MCF 10A (cell line): ENCODE measurements at regions of chr7 and their contacts with region 1.

Region 1: DNA sequence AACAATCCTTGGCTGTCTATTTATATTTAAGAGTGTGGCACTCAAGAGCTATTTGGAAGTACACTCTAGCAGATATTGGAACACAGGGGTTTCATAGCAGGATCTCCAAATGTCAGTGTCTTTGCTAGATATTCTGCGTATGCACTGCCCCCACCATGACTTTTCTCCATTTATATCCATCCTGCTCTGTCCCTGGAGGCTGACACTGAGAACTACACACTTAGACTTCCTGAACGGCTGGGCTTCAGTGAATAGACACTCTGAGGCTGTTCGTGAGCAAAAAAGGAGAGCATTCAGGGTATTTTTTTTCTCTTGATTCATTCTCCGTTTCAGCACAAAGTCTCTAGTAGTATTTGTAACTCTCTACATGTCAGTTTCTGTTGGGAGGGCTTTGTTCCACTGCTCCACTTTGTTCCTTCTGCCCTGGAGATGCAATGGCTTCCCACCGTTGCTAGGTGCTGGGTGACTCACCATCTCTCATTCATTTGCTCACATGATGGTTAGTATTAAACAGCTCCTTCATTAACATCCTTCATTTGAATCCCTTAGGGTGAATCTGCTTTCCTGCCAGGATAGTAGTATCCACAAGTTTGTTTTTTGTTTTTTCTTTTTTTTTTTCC is 155.9 kb upstream of the SLC13A1 start:
- DNase-seq: peak; percentile 27
- H3K4me3 Mint-ChIP-seq: no peak overlapping the region
- H3K27ac Mint-ChIP-seq: no peak overlapping the region
- H3K4me1 Mint-ChIP-seq: no peaks in the 10 kb centered on the region
- H3K27me3 Mint-ChIP-seq: no peaks in the 10 kb centered on the region
- CTCF ChIP-seq: no peak

Region 2: GRCh38 chr7:123208793-123209192 is 146.9 kb before region 1 on chr7:
- CTCF ChIA-PET with region 1: interaction called, 18 read pairs
- POLR2A ChIA-PET with region 1: no interaction called
- intact Hi-C with region 1: no loop called
- DNase-seq: peak; percentile 39
- H3K4me3 Mint-ChIP-seq: no peak overlapping the region
- H3K27ac Mint-ChIP-seq: no peak overlapping the region
- H3K4me1 Mint-ChIP-seq: peaks cover 6% of the 10 kb centered on the region
- H3K27me3 Mint-ChIP-seq: no peaks in the 10 kb centered on the region
- CTCF ChIP-seq: no peak